Dorsolateral prefrontal cortex (tissue), 120 donors: ENCODE measurements at regions of chr16 and their contacts with region 1.

Region 1: DNA sequence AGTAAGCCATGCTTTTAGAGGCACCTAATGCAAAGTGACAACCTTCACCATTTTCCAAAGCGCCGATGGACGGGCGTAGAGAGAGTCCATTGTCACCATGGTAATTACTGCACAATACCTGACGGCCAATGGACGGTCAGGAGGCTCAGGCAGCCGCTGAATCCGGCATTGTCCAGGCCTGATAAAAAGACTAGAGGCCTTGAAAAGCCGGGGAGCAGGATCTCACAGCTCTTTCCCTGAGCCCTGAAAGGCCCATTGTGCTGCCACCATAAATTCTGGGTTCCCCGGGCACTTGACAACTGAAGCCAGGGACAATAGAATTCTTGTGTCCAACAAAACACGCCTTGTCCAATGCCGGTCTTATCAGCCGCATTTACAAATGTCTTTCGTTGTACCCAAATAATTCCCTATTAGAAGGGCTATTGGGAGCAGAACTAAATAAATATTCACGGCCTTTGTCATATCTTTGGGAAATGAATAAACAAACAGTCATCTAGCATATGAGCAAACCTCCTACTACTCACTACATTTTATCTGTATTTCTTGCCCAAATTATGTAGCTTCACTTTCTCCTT is 62.4 kb downstream of the CDH11 start:
- DNase-seq: peak; percentile 9 to 94 (median 88)
- H3K4me3 ChIP-seq: peak overlapping the region in 35 of 59 donors; percentile 2 to 54 (median 24)
- H3K27ac ChIP-seq: peak overlapping the region; percentile 60 to 96 (median 89)
- H3K27me3 ChIP-seq: no peaks in the 10 kb centered on the region
- CTCF ChIP-seq: peak in 7 of 56 donors; percentile 11 to 33 (median 17)

Region 2: DNA sequence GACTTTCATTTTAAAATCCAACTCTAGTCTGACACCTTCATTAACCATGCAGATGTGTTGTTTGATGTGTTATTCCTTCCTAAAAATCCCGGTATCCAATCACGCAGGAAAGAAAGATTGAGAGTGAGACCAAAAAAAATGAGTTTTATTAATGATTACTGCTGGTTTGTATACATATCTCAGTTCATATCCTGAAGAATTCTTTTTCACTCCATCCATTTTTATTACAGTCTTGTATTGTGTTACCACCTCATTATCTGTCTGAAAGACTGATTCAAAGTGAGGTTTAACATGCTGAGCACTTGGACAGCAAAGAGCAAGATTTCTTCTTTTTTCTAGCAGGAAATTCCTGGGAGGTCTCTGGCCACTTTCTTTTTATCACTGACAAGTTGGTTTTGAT is 205.9 kb before region 1 on chr16:
- intact Hi-C with region 1: no loop called
- DNase-seq: no peak
- H3K4me3 ChIP-seq: no peak overlapping the region
- H3K27ac ChIP-seq: no peak overlapping the region
- H3K27me3 ChIP-seq: peaks cover 0 to 3% (median 0%) of the 10 kb centered on the region in 45 donors
- CTCF ChIP-seq: no peak

Region 3: DNA sequence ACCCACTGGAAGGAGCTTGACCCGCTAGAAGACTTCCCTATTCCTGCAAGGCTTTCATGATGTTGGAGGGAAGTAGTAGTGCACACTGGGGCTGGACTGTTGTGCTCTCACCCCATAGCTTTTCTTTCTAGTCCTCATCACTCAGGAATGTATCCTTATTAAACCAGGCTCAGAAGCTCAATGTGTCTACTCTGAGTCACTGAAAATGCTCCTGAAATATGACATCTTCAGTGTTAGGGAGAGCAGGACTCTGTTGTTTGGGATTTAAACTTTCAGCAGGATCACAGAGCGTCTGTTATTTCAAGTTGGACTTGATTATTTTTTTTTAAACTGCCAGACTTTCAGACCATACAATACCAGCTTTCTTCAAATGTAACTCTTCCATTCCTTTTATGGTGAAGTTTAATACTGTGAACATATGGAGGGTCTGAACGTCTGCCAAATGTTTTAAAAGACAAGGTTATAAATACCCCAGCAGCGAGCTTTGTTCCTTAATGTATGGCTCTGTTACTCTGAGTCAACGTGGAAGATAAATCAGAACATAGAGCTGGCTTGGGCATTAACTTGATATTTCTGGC is 195.2 kb before region 1 on chr16:
- intact Hi-C with region 1: loop called in 1 of 2 experiments (anchors 10 kb)
- DNase-seq: no peak
- H3K4me3 ChIP-seq: no peak overlapping the region
- H3K27ac ChIP-seq: peak overlapping the region in 3 of 59 donors; percentile 20 to 42 (median 37)
- H3K27me3 ChIP-seq: no peaks in the 10 kb centered on the region
- CTCF ChIP-seq: no peak

Region 4: DNA sequence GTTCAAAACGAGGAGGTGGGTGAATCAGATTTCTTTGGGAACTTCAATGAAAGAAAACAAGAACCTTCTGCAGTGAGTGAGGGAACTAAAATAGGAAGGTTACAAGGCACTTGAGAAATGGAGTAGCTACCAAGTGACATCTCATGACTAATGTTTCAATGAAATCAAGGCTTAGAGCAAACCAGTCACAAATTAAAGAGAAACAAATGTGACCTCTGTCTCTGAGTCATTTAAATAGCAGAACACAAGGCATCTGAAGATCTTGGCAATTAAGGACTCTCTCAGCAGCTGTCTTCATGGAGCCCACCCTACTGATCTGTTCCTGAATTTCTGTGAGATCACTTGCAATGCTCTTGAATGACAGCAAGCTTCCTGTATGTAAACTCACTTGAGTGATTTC is 47.1 kb before region 1 on chr16:
- intact Hi-C with region 1: loop called in 1 of 2 experiments (anchors 5 kb)
- DNase-seq: no peak
- H3K4me3 ChIP-seq: no peak overlapping the region
- H3K27ac ChIP-seq: peak overlapping the region in 4 of 59 donors; percentile 3 to 40 (median 26)
- H3K27me3 ChIP-seq: no peaks in the 10 kb centered on the region
- CTCF ChIP-seq: no peak

Region 5: GRCh38 chr16:65142276-65142675 is 82.8 kb after region 1 on chr16:
- intact Hi-C with region 1: no loop called
- DNase-seq: no peak
- H3K4me3 ChIP-seq: no peak overlapping the region
- H3K27ac ChIP-seq: no peak overlapping the region
- H3K27me3 ChIP-seq: no peaks in the 10 kb centered on the region
- CTCF ChIP-seq: no peak